K562 (cell line): ENCODE measurements at regions of chr20 and their contacts with region 1.

Region 1: DNA sequence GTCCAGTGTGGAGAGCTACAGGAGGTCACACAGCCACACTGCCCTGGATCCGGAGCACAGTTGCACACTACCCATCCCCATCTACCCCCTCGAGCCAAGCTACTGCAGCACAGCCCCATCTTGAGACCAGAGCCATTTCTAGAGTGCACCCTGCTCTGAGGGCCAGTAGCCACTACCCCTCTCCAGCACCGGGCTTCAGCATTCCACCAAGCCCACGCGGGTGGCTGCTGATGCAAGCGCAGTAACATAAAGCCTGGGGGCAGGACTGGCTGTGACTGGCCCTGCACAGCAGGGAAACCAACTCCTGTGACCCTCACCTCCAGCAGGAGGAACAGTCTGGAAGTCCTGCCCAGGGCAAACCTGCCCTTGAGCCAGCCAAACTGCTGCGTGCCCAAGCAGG is 41.6 kb upstream of the SRSF6 start:
- DNase-seq: no peak
- ATAC-seq: peak; percentile 52; the same call in 2 of the 3 replicates
- H3K4me3 ChIP-seq: no peak overlapping the region
- H3K27ac ChIP-seq: no peak overlapping the region
- H3K4me1 ChIP-seq: no peaks in the 10 kb centered on the region
- H3K27me3 ChIP-seq: no peaks in the 10 kb centered on the region; a peak in 1 of 5 replicates
- CTCF ChIP-seq: no peak
- EP300 ChIP-seq: no peak
- POLR2A ChIP-seq: no peak
- RAD21 ChIP-seq: no peak

Region 2: DNA sequence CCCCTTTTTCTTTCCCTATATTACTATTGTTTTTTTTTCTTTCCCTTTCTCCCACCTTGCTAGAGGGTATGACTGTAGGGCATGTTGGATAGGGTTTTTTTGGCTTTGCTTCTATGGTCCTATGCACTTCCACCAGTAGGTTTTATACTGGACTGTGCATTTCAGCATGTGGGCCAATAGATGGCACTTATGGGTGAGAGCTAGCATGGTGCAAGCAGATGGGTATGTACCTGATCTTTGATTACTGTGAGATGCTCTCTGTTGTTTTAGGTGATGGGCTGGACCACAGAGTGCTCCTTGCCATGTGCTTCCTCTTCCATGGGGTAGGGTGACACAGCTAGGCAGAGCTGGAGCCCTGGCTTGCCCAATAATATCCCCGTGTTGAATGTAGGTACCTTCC is 1669.4 kb before region 1 on chr20:
- CTCF ChIA-PET with region 1: no interaction called
- POLR2A ChIA-PET with region 1: no interaction called
- in situ Hi-C with region 1: loop called (anchors 10 kb)
- intact Hi-C with region 1: no loop called
- DNase-seq: no peak
- ATAC-seq: peak; percentile 29; the same call in 1 of the 3 replicates
- H3K4me3 ChIP-seq: no peak overlapping the region
- H3K27ac ChIP-seq: no peak overlapping the region
- H3K4me1 ChIP-seq: no peaks in the 10 kb centered on the region; a peak in 2 of 5 replicates
- H3K27me3 ChIP-seq: no peaks in the 10 kb centered on the region; a peak in 1 of 5 replicates
- CTCF ChIP-seq: peak in 2 of 3 experiments; percentile 12 to 42; a peak in 2 of 6 replicates
- EP300 ChIP-seq: no peak
- POLR2A ChIP-seq: no peak
- RAD21 ChIP-seq: no peak

Region 3: GRCh38 chr20:43533060-43533459 is 117.0 kb after region 1 on chr20:
- CTCF ChIA-PET with region 1: no interaction called
- POLR2A ChIA-PET with region 1: no interaction called
- in situ Hi-C with region 1: no loop called
- intact Hi-C with region 1: no loop called
- DNase-seq: no peak
- ATAC-seq: no peak
- H3K4me3 ChIP-seq: no peak overlapping the region
- H3K27ac ChIP-seq: no peak overlapping the region
- H3K4me1 ChIP-seq: peaks cover 4 to 7% of the 10 kb centered on the region in 2 experiments; a peak in 4 of 5 replicates
- H3K27me3 ChIP-seq: no peaks in the 10 kb centered on the region
- CTCF ChIP-seq: no peak
- EP300 ChIP-seq: no peak
- POLR2A ChIP-seq: no peak
- RAD21 ChIP-seq: no peak

Region 4: GRCh38 chr20:43812151-43812550 is 396.1 kb after region 1 on chr20:
- CTCF ChIA-PET with region 1: no interaction called
- POLR2A ChIA-PET with region 1: no interaction called
- in situ Hi-C with region 1: no loop called
- intact Hi-C with region 1: no loop called
- DNase-seq: no peak
- ATAC-seq: no peak
- H3K4me3 ChIP-seq: no peak overlapping the region
- H3K27ac ChIP-seq: no peak overlapping the region
- H3K4me1 ChIP-seq: no peaks in the 10 kb centered on the region
- H3K27me3 ChIP-seq: no peaks in the 10 kb centered on the region
- CTCF ChIP-seq: no peak
- EP300 ChIP-seq: no peak
- POLR2A ChIP-seq: no peak
- RAD21 ChIP-seq: no peak